ENCODE measurements at regions of chr4 and their contacts with region 1.

Region 1: GRCh38 chr4:107548211-107548905 is 171.7 kb downstream of the PAPSS1 start:
- DNase-seq: no peak
- H3K4me3 ChIP-seq: no peak overlapping the region
- H3K27ac ChIP-seq: no peak overlapping the region
- H3K4me1 ChIP-seq: peaks cover 2% of the 10 kb centered on the region
- H3K27me3 ChIP-seq: no peaks in the 10 kb centered on the region
- CTCF ChIP-seq: no peak

Region 2: DNA sequence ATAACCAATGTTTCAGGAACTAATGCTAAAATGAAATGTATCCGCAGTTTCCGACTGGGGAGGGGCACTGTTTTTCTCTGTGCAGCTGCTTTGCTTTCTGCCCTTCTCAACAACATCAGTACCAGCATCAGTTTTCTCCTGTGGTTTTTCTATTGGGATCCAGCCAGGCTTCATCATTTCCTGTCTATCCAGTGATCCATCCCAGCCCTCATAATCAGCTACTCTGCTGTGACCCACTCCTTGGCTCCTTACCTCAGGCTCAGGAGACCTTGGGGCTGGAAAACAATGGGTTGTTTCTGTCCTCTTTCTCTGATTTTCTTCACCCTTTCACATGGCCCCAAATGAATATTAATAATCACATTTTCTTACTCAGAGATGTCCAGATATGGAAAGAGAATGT is 290.0 kb before region 1 on chr4:
- CTCF ChIA-PET with region 1: no interaction called
- dilution Hi-C with region 1: no loop called
- in situ Hi-C with region 1: no loop called
- intact Hi-C with region 1: no loop called
- DNase-seq: peak; percentile 69
- H3K4me3 ChIP-seq: no peak overlapping the region
- H3K27ac ChIP-seq: no peak overlapping the region
- H3K4me1 ChIP-seq: peaks cover 27% of the 10 kb centered on the region
- H3K27me3 ChIP-seq: no peaks in the 10 kb centered on the region
- CTCF ChIP-seq: no peak

Region 3: GRCh38 chr4:107736924-107737448 is 188.6 kb after region 1 on chr4:
- CTCF ChIA-PET with region 1: no interaction called
- dilution Hi-C with region 1: no loop called
- in situ Hi-C with region 1: no loop called
- intact Hi-C with region 1: loop called (anchors 5 kb)
- DNase-seq: no peak
- H3K4me3 ChIP-seq: no peak overlapping the region
- H3K27ac ChIP-seq: no peak overlapping the region
- H3K4me1 ChIP-seq: no peaks in the 10 kb centered on the region
- H3K27me3 ChIP-seq: no peaks in the 10 kb centered on the region
- CTCF ChIP-seq: peak; percentile 79 to 83

Measured in mammary epithelial cell (primary cell).